ENCODE measurements at regions of chr16 and their contacts with region 1.

Region 1: GRCh38 chr16:55711959-55712876 is 56.4 kb downstream of the SLC6A2 start:
- DNase-seq: peak; percentile 17
- ATAC-seq: peak; percentile 93
- H3K4me3 ChIP-seq: no peak overlapping the region
- H3K27ac ChIP-seq: no peak overlapping the region
- H3K4me1 ChIP-seq: no peaks in the 10 kb centered on the region
- H3K27me3 ChIP-seq: no peaks in the 10 kb centered on the region
- CTCF ChIP-seq: peak; percentile 72

Region 2: DNA sequence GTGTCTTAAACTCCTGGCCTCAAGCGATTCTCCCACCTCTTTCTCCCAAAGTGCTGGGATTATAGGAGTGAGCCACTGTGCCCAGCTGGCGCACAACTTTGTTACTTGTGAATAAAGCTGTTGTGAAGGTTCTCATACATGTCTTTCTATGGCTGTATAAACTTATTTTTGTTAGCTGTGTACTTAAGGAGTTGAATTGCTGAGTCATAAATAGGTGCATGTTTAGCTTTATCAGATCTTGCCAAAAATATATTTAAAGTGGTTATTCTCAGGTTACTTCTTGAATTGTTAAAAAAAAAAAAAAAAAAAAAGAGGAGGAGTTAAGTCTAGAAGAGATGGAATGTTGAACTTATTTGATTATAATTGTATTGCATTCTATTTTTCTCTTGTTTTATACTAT is 1378.0 kb before region 1 on chr16:
- CTCF ChIA-PET with region 1: interaction called, 10 read pairs
- POLR2A ChIA-PET with region 1: no interaction called
- in situ Hi-C with region 1: no loop called
- intact Hi-C with region 1: no loop called
- DNase-seq: no peak
- ATAC-seq: no peak
- H3K4me3 ChIP-seq: no peak overlapping the region
- H3K27ac ChIP-seq: no peak overlapping the region
- H3K4me1 ChIP-seq: no peaks in the 10 kb centered on the region
- H3K27me3 ChIP-seq: peaks cover 2% of the 10 kb centered on the region; the same call in 1 of the 2 replicates
- CTCF ChIP-seq: no peak

Region 3: GRCh38 chr16:55842369-55843104 is 130.3 kb after region 1 on chr16:
- CTCF ChIA-PET with region 1: no interaction called
- POLR2A ChIA-PET with region 1: no interaction called
- in situ Hi-C with region 1: loop called (anchors 25 kb)
- intact Hi-C with region 1: loop called (anchors 1 kb)
- DNase-seq: peak; percentile 17
- ATAC-seq: peak; percentile 85
- H3K4me3 ChIP-seq: no peak overlapping the region
- H3K27ac ChIP-seq: no peak overlapping the region
- H3K4me1 ChIP-seq: no peaks in the 10 kb centered on the region
- H3K27me3 ChIP-seq: no peaks in the 10 kb centered on the region
- CTCF ChIP-seq: peak; percentile 77

Measured in Panc1 (cell line).